ENCODE measurements at regions of chr14 and their contacts with region 1.

Region 1: GRCh38 chr14:104137297-104138097 is 890 bp upstream of the KIF26A start:
- DNase-seq: peak; percentile 43
- H3K4me3 ChIP-seq: no peak overlapping the region
- H3K27ac ChIP-seq: no peak overlapping the region
- H3K4me1 ChIP-seq: no peaks in the 10 kb centered on the region
- CTCF ChIP-seq: peak; percentile 84

Region 2: DNA sequence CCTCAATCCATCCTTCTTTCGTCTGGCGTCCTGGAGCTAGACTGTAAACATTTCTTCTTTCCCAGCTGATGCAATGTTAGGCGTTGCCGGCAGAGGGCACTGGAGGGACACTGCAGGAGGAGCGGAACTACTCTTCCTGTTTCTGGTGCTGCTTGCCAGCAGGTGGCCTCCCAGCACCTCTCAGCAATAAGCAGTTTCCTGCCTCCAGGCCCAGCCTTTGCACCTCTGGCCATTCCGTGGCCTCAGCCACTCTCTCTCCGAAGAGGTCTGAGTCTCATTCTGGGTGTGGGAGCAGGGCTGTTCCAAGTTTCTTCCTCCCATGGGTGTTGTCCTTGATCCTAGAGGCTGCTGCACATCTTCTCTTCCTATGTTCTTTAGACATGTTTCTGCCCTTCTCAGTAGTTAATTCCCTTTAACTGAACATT is 59.5 kb before region 1 on chr14:
- CTCF ChIA-PET with region 1: no interaction called
- POLR2A ChIA-PET with region 1: no interaction called
- intact Hi-C with region 1: no loop called
- DNase-seq: peak; percentile 92
- H3K4me3 ChIP-seq: no peak overlapping the region
- H3K27ac ChIP-seq: no peak overlapping the region
- H3K4me1 ChIP-seq: peaks cover 5% of the 10 kb centered on the region
- CTCF ChIP-seq: peak; percentile 100

Region 3: DNA sequence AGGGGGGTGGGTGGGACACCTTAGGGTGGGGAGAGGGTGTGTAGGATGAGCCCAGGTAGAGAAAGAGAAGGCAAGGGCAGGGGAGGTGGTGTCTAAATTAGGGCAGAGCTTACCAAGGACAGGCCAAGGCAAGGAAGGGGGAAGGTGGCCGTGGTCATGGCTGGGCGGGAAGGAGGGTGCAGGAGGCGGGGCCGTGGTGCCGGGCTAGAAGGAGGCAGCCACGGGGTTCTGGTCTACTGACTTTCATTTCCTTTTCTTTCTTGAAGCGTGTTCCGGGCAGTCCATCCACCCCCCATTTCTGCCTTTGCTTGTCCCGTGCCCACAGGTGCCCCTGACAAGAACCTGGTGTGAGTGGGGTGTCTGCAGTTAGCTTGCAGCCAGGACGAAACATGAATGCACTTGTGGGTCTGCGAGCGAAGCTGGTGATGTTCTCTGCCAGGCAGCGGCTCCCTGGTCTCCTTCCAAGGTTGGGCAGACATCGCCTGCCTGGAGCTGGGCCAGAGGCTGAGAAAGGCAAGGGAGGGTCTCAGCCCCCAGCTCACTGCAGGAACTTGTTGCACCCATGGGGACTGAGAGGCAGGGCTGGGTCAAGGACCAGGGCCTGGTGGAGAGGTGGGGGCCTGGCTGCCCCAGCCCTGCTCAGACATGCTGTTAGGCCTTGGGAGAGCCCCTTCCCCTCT is 59.1 kb after region 1 on chr14:
- CTCF ChIA-PET with region 1: no interaction called
- POLR2A ChIA-PET with region 1: no interaction called
- intact Hi-C with region 1: no loop called
- DNase-seq: peak; percentile 34
- H3K4me3 ChIP-seq: no peak overlapping the region
- H3K27ac ChIP-seq: no peak overlapping the region
- H3K4me1 ChIP-seq: peaks cover 7% of the 10 kb centered on the region
- CTCF ChIP-seq: no peak

Region 4: GRCh38 chr14:104563742-104564615 is 426.5 kb after region 1 on chr14:
- CTCF ChIA-PET with region 1: no interaction called
- POLR2A ChIA-PET with region 1: no interaction called
- intact Hi-C with region 1: loop called (anchors 1 kb)
- DNase-seq: peak; percentile 38
- H3K4me3 ChIP-seq: no peak overlapping the region
- H3K27ac ChIP-seq: no peak overlapping the region
- H3K4me1 ChIP-seq: no peaks in the 10 kb centered on the region
- CTCF ChIP-seq: peak; percentile 75

Region 5: DNA sequence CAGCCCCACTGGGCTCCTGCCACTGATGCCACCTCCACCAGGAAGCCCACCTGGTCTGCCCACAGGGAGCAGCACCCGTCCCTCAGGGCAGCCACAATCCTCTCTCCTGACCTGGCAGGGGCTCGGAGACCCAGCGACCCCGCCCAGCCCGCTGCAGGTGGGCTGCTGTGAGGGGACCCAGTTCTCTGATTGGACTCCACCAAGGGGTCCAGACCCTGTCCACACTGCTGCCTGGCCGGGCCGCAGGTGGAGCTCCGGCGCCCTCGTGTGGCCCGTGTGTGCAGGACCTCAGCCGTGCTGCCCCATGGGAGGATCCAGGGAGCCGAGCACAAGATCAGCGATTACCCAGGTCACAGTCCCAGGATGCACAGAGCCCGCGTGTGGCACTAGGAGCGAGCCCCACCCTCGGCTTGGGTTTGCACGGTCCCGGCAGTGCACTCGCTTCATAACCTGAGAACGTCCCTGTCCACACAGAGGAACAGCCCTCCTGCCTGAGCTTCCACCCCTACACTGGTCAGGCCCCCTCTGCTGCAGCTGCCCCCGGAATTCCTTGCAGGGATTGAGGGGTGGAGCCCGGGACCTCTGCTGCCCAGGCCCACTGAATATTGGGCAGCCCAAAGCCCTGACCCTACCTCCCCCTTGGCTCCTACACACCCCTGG is 502.5 kb after region 1 on chr14:
- CTCF ChIA-PET with region 1: no interaction called
- POLR2A ChIA-PET with region 1: no interaction called
- intact Hi-C with region 1: loop called (anchors 1 kb)
- DNase-seq: peak; percentile 69
- H3K4me3 ChIP-seq: no peak overlapping the region
- H3K27ac ChIP-seq: no peak overlapping the region
- H3K4me1 ChIP-seq: no peaks in the 10 kb centered on the region
- CTCF ChIP-seq: peak; percentile 94